Heart right ventricle (tissue), 16 donors: ENCODE measurements at regions of chr5 and their contacts with region 1.

Region 1: GRCh38 chr5:138632900-138633489 is 57.8 kb upstream of the HSPA9 start:
- DNase-seq: peak; percentile 41 to 68
- ATAC-seq: peak; percentile 44 to 82 (median 72)
- H3K4me3 ChIP-seq: no peak overlapping the region
- H3K27ac ChIP-seq: no peak overlapping the region
- H3K4me1 ChIP-seq: peaks cover 0 to 16% (median 5%) of the 10 kb centered on the region in 9 donors
- H3K27me3 ChIP-seq: no peaks in the 10 kb centered on the region
- CTCF ChIP-seq: peak in 7 of 9 donors; percentile 29 to 52 (median 41)

Region 2: DNA sequence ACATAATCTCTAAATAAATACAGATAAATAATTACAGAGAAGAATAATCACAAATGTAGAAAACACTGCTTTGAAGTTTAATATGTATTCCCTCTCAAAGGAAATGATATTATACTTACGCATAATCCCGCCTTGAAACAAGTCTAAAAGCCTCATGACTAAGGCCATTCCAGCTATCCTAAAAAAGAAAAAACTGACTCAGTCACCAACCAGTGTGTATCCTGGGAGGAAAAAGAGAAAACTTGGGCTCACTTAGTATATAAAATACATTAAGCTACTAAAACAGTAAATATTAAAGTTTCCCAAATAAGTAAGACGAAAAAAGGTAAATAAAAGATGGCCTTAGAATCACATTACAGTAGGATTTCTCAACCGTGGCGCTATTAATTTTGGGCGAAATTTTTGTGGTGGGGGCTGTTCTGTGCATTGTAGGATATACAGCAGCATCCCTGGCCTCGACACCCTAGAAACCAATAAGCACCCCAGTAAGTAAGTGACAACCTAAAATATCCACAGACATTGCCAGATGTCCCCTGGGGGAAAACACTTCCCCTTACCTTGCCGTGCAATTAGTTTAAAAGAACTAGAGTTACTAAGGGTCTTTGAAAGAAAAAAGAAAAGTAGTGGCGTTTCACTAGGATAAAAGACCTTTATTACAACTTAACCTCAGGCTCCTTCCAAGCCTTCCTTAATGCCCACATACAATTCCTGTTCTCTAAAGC is 58.9 kb before region 1 on chr5:
- intact Hi-C with region 1: no loop called
- DNase-seq: no peak
- ATAC-seq: no peak
- H3K4me3 ChIP-seq: peak overlapping the region; percentile 69 to 98 (median 86)
- H3K27ac ChIP-seq: peak overlapping the region in 9 of 10 donors; percentile 93 to 99 (median 97)
- H3K4me1 ChIP-seq: peaks cover 0 to 51% (median 23%) of the 10 kb centered on the region in 9 donors
- H3K27me3 ChIP-seq: no peaks in the 10 kb centered on the region
- CTCF ChIP-seq: no peak

Region 3: GRCh38 chr5:138583984-138584637 is 48.9 kb before region 1 on chr5:
- intact Hi-C with region 1: loop called in 1 of 10 experiments (anchors 10 kb)
- DNase-seq: no peak
- ATAC-seq: no peak
- H3K4me3 ChIP-seq: no peak overlapping the region
- H3K27ac ChIP-seq: no peak overlapping the region
- H3K4me1 ChIP-seq: peaks cover 0 to 5% (median 3%) of the 10 kb centered on the region in 9 donors
- H3K27me3 ChIP-seq: no peaks in the 10 kb centered on the region
- CTCF ChIP-seq: no peak

Region 4: DNA sequence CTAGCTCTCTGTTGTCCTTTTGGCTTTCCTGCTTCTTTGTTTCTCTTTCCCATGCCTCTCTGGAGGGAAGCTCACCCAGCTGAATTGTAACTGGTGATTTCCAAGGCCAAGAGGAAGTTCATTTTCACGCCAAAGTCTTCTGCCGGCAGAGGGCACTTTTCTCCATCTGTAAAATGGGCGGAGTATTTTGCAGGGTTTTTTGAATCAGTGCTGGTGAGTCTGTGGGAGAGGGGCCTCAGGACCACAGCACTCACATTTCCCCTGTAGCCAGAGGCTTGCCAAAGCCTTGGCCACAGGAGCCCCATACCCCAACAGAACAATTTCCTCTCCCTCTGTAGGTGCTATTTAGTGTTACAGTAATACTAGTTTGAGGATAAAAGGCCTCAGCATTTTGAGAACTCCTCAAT is 618.3 kb after region 1 on chr5:
- intact Hi-C with region 1: loop called in 1 of 10 experiments (anchors 10 kb)
- DNase-seq: no peak
- ATAC-seq: no peak
- H3K4me3 ChIP-seq: no peak overlapping the region
- H3K27ac ChIP-seq: no peak overlapping the region
- H3K4me1 ChIP-seq: peaks cover 0 to 15% (median 0%) of the 10 kb centered on the region in 9 donors
- H3K27me3 ChIP-seq: no peaks in the 10 kb centered on the region
- CTCF ChIP-seq: peak in 5 of 9 donors; percentile 6 to 42 (median 33)